Activated CD4-positive, alpha-beta T cell treated with anti-CD3 and anti-CD28 coated beads, Interleukin-2, amount 10 ng/mL, durations not matched to agents 7 days and 5 days (primary cell): ENCODE measurements at regions of chr3 and their contacts with region 1.

Region 1: DNA sequence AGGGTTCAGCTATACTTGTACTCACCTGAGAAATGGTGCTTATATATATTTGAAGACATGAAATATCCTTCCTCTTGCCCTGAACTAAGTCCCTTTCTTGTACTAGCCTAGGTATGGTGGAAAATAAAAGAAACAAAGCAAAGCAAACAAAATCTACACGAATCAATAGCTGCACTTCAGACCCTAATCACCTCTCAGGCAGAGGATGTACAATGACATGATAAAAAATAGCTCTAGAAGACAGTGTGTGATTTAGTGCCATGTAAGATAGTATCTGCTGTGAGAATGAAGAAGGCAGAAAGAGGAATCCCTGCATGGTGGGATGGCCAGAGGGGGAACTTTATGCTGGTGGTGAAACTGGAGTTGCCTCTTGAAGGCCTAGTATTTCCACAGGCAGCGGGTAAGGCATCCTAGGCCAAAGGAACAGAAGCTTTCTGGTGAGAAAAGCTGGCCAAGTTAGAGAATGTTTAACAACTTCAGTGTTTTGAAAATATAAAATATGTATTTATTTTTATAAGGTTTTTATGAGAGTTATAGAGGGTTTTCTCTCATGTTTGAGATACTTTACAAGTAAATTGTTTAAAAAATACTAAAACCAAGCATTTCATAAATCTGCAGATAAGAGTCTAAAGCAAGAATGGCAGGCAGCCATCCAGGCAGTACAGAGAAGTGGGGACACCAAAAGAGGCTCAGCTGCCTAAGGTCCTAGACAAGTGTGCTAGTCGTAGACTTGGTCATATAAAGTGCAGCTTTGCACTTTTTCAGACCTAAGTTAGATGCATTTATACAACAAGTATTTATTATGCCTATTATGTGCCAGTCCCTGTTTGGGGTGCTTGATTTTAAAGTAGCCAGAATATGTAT is 14.9 kb downstream of the LEKR1 start:
- DNase-seq: no peak
- H3K4me3 Mint-ChIP-seq: no peak overlapping the region
- H3K27ac Mint-ChIP-seq: no peak overlapping the region
- H3K4me1 Mint-ChIP-seq: no peaks in the 10 kb centered on the region
- H3K27me3 Mint-ChIP-seq: no peaks in the 10 kb centered on the region

Region 2: DNA sequence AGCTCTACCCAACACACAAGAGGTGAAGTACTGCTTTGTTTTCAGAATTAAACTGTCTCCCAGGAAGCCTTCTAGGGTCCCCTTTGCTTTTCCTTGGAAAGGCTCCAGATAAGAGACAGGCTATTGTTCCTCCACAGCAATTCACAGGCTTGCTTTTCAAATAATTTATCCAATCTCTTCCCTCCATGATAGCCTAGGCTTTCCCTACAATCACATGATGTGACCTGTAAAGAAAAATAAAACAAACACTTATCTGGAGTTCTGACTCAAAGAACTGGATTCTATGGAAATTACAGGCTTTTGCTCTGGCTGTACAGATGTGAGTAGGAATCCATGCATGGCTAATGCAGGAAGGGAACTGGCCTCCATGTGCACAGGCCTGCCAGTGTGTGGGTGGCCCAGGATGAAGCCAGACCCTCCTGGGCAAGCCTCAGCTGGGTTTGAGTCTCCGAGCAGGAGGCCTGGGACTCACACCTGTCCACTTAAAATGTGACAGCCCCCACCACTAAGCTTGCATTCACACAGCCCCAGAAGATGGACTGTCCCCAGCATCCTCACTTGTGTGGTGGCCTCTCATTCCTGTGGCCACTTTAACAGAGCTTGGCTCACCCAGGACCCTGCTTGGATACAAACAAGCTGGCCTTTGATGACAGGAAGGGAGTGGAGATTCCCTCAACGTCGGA is 90.7 kb before region 1 on chr3:
- CTCF ChIA-PET with region 1: no interaction called
- POLR2A ChIA-PET with region 1: interaction called, 10 read pairs
- DNase-seq: no peak
- H3K4me3 Mint-ChIP-seq: no peak overlapping the region
- H3K27ac Mint-ChIP-seq: no peak overlapping the region
- H3K4me1 Mint-ChIP-seq: no peaks in the 10 kb centered on the region
- H3K27me3 Mint-ChIP-seq: peaks cover 18% of the 10 kb centered on the region

Region 3: DNA sequence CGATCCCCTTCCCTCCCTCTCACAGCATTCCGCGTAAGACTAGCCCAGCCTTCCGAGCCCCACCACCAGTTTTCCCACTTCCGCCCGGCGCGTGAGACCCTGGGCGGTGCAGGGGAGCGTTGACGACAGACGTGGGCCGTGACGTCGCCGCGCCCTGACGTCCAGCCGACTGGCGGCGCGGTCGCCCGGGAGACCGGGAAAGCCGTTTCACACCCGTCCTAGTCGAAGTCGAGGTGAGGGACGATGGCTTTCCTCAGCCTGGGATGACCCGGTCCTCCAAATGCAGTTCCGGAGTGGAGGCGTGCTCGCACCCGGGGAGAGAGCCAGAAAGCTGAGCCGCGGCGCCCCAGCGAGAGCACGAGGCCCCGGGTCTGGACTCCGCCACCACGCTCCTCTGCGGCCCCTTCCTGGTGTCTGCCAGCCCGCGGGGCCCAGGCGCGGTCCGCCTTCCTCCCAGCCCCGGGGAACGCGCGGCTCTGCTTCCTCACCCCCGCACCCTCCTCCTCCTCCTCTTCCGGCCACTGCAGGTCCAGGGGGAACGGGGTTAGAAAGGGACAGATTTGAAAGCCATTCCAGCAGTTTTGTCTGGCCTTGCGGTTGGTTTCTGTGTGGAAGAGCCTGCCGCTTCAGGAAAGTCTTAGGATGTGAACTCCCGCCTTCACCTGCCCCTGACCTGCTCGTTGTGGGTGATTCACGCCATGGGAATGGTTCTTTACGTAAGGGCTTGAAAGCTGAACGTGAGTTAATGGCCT is 14.7 kb before region 1 on chr3 and contains the start of gene LEKR1:
- CTCF ChIA-PET with region 1: no interaction called
- POLR2A ChIA-PET with region 1: no interaction called
- DNase-seq: peak; percentile 58
- H3K4me3 Mint-ChIP-seq: peak within 1 kb of the TSS; percentile 88
- H3K27ac Mint-ChIP-seq: peak within 1 kb of the TSS; percentile 96
- H3K4me1 Mint-ChIP-seq: peaks cover 46% of the 10 kb centered on the region
- H3K27me3 Mint-ChIP-seq: peaks cover 4% of the 10 kb centered on the region
- total RNA-seq, gene LEKR1: 0.47 to 0.54 TPM